Calu3 (cell line): ENCODE measurements at regions of chr15 and their contacts with region 1.

Region 1: DNA sequence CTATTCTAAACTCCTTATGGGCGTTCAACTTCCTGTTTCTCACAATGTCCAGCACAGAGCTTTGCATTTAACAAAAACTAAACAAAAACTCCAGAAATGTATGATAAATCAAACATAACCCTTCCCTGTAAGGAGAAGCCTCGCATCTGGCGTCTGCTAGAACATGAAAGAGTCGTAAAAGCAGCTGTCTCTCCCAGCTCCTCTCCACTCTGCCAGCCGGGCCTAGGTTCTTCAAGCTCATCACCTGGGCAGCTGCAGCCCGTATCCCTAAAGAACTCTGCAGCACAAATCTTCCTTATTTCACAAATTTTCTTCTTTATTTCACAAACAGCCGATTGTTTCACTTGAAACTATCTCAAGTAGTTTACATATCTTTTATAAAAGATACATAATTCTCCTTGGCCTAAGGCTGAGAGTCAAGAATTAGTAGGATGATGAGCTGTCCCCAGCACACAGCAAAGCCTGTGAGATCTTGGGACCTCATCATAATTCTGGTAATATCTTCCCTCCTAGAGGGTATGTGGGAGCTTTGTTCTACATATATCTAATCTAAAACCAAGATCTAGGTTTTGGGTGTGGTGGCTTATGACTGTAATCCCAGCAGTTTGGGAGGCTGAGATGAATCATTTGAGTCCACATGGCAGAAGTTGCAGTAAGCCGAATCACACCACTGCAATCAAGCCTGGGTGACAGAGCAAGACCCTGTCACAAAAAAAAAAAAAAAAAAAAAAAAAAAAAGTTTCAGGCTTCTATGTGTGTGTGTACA is 35.3 kb downstream of the ANXA2 start:
- DNase-seq: no peak
- H3K4me3 Mint-ChIP-seq: peak overlapping the region; percentile 10
- H3K27ac Mint-ChIP-seq: peak overlapping the region; percentile 89
- H3K4me1 Mint-ChIP-seq: peaks cover 67% of the 10 kb centered on the region
- H3K27me3 Mint-ChIP-seq: no peaks in the 10 kb centered on the region
- CTCF ChIP-seq: no peak

Region 2: DNA sequence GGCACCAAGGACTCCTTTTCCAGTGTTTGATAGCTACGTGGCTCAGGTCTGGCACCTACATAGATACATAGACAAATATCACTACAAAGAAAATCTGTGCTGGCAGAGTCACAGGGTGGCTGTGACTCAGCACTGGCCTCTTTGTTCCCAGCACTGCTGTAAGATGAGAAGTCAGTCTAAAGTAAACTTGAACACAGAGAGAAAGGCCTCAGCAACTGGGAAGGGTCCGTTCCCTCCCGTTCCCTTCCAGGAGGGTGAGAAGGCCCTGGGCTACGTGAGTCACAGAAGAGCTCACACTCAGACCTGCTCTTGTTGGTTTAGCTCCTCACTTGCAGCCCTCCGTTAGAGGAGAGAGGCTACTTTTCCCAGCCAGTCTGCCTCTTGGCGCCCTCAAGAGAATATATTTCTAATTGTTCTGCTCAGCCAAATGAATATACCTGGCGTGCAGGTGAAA is 12.2 kb after region 1 on chr15:
- CTCF ChIA-PET with region 1: interaction called, 14 read pairs
- intact Hi-C with region 1: no loop called
- DNase-seq: peak; percentile 92
- H3K4me3 Mint-ChIP-seq: peak overlapping the region; percentile 67
- H3K27ac Mint-ChIP-seq: peak overlapping the region; percentile 100
- H3K4me1 Mint-ChIP-seq: peaks cover 85% of the 10 kb centered on the region
- H3K27me3 Mint-ChIP-seq: no peaks in the 10 kb centered on the region
- CTCF ChIP-seq: no peak

Region 3: GRCh38 chr15:60397772-60398445 is 35.4 kb after region 1 on chr15 and contains the start of gene ANXA2:
- CTCF ChIA-PET with region 1: interaction called, 4 read pairs
- intact Hi-C with region 1: loop called (anchors 5 kb)
- DNase-seq: peak; percentile 96
- H3K4me3 Mint-ChIP-seq: peak within 1 kb of the TSS; percentile 86
- H3K27ac Mint-ChIP-seq: peak within 1 kb of the TSS; percentile 99
- H3K4me1 Mint-ChIP-seq: peaks cover 59% of the 10 kb centered on the region
- H3K27me3 Mint-ChIP-seq: peaks cover 13% of the 10 kb centered on the region
- CTCF ChIP-seq: no peak
- total RNA-seq, gene ANXA2: 3,100 and 3,305 TPM in 2 replicates

Region 4: DNA sequence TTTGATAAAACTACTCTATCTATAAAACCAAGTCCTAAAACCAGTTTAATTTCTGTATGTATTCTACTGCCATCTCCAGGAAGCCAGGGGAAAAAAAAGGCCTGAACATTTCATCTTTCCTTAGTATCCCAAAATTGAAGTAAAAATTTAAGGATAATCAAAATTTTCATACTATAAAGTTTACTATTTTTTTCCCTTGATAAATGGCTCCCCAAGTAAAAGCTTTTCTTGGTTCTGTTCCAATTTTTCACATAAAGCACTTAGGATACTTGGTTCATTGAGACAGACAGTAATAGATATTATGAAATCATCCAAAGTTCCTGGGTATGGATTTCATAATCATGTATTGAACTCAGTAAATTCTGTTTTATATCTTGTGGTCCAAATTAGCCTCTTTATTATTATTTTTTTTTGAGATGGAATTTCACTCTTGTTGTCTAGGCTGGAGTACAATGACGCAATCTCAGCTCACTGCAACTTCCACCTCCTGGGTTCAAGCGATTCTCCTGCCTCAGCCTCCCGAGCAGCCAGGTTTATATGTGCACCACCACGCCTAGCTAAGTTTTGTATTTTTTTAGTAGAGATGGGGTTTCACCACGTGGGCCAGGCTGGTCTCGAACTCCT is 81.9 kb after region 1 on chr15:
- CTCF ChIA-PET with region 1: interaction called, 6 read pairs
- intact Hi-C with region 1: loop called (anchors 1 kb)
- DNase-seq: peak; percentile 13
- H3K4me3 Mint-ChIP-seq: no peak overlapping the region
- H3K27ac Mint-ChIP-seq: peak overlapping the region; percentile 12
- H3K4me1 Mint-ChIP-seq: peaks cover 16% of the 10 kb centered on the region
- H3K27me3 Mint-ChIP-seq: no peaks in the 10 kb centered on the region
- CTCF ChIP-seq: peak; percentile 17

Region 5: GRCh38 chr15:62188744-62189143 is 1826.2 kb after region 1 on chr15:
- CTCF ChIA-PET with region 1: interaction called, 11 read pairs
- intact Hi-C with region 1: no loop called
- DNase-seq: no peak
- H3K4me3 Mint-ChIP-seq: no peak overlapping the region
- H3K27ac Mint-ChIP-seq: no peak overlapping the region
- H3K4me1 Mint-ChIP-seq: peaks cover 21% of the 10 kb centered on the region
- H3K27me3 Mint-ChIP-seq: no peaks in the 10 kb centered on the region
- CTCF ChIP-seq: no peak